Activated CD4-positive, alpha-beta memory T cell treated with anti-CD3 and anti-CD28 coated beads, Interleukin-2, amount 10 ng/mL, durations not matched to agents 7 days and 5 days (primary cell): ENCODE measurements at regions of chr22 and their contacts with region 1.

Region 1: GRCh38 chr22:22877523-22878210 is 9.9 kb upstream of the IGLL5 start:
- DNase-seq: peak; percentile 78
- H3K4me3 Mint-ChIP-seq: no peak overlapping the region
- H3K27ac Mint-ChIP-seq: no peak overlapping the region
- H3K4me1 Mint-ChIP-seq: no peaks in the 10 kb centered on the region
- H3K27me3 Mint-ChIP-seq: peaks cover 23% of the 10 kb centered on the region

Region 2: DNA sequence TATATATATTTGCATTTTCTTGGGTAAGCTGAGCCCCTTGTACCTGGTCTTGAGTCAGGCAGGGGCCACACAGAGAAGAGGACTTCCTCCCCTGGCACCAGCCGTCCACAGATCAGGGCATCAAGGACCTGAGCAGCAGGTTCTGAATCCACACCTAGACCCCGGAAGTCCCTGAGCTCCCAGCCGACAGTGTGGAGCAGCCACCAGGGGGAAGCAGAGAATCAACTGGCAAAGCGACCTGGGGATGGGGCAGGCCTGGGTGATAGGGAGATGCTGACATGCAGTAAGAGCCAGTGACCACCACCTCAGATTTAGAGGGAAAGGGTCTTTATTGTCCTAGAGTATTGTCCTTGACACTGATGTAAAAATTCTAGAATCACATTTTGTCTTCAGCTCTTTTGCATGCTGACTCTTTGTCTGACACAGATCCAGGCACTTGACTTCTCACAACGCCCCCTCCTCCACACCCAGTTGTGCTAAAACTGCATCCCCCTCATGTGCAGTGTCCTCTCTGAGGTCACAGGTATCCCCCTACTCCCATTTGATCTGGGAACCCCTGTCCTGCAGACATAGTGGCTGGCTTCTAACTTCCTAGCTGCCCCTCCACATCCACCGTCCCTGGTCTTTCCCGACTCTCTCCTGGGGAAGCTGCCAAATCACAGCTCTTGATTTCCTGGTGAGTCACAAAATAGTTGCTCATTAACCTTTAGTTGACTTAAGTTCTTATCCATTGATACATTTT is 124.0 kb before region 1 on chr22:
- CTCF ChIA-PET with region 1: interaction called, 15 read pairs
- POLR2A ChIA-PET with region 1: no interaction called
- DNase-seq: peak; percentile 83
- H3K4me3 Mint-ChIP-seq: no peak overlapping the region
- H3K27ac Mint-ChIP-seq: no peak overlapping the region
- H3K4me1 Mint-ChIP-seq: peaks cover 6% of the 10 kb centered on the region
- H3K27me3 Mint-ChIP-seq: no peaks in the 10 kb centered on the region

Region 3: DNA sequence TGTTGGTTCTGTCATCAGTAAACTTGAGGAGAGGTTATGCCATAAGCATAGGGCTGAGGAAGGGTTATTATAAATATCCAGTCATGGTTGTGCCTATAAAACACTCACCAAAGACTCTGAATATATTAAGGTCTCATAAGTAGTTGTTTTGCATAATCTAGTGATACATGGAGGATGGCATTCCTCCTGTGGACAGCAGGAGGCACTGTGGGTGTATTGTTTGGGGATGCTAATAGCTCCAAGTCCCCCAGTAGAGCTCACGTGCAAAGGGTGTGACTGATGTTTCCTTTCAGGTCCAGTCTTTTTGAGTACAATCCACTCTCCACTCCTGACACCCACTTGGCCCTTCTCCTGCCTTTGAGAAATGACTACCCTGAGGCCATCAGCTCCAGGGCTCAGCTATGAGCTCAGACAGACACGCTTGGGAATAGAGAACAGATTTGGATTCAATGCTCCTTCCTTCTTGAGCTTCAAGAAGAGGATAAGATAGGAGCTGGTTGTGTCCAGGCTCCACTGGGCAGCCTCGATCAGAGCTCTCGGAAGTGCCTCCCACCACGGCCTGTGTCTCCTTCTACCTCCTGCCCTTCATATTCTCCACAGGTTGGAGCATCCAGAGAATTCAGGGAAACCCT is 75.2 kb before region 1 on chr22:
- CTCF ChIA-PET with region 1: interaction called, 235 read pairs
- POLR2A ChIA-PET with region 1: no interaction called
- DNase-seq: peak; percentile 55
- H3K4me3 Mint-ChIP-seq: no peak overlapping the region
- H3K27ac Mint-ChIP-seq: no peak overlapping the region
- H3K4me1 Mint-ChIP-seq: peaks cover 4% of the 10 kb centered on the region
- H3K27me3 Mint-ChIP-seq: peaks cover 13% of the 10 kb centered on the region

Region 4: DNA sequence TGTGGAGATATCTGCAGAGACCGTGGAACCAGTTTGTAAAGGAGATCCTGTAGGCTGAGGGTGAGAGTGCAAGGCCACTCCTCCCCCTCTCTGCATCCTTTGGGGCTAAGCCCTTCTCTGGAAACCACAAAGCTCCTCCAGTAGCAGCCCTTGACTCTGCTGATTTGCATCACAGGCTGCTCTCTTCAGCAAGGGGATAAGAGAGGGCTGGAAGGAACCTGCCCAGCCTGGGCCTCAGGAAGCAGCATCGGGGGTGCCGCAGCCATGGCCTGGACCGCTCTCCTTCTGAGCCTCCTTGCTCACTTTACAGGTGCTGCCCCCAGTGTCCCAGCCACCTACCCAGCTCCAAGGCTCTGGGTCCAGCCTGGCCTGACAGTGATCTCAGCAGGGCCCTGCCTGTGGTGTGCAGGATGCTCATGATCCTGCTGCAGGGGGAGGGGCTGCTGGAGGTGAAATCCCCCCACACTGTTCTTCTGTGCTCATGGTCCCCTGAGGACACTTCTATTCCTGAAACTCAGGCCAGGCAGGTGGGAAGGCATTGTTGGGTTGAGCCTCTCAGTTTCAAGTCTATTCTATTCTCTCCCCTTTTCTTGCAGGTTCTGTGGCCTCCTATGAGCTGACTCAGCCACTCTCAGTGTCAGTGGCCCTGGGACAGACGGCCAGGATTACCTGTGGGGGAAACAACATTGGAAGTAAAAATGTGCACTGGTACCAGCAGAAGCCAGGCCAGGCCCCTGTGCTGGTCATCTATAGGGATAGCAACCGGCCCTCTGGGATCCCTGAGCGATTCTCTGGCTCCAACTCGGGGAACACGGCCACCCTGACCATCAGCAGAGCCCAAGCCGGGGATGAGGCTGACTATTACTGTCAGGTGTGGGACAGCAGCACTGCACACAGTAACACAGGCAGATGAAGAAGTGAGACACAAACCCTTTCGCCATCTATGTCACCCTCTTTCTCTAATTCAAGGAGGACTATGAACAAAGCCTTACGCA is 58.5 kb before region 1 on chr22:
- CTCF ChIA-PET with region 1: interaction called, 11 read pairs
- POLR2A ChIA-PET with region 1: no interaction called
- DNase-seq: peak; percentile 76
- H3K4me3 Mint-ChIP-seq: peak overlapping the region; percentile 72
- H3K27ac Mint-ChIP-seq: peak overlapping the region; percentile 96
- H3K4me1 Mint-ChIP-seq: peaks cover 87% of the 10 kb centered on the region
- H3K27me3 Mint-ChIP-seq: no peaks in the 10 kb centered on the region

Region 5: DNA sequence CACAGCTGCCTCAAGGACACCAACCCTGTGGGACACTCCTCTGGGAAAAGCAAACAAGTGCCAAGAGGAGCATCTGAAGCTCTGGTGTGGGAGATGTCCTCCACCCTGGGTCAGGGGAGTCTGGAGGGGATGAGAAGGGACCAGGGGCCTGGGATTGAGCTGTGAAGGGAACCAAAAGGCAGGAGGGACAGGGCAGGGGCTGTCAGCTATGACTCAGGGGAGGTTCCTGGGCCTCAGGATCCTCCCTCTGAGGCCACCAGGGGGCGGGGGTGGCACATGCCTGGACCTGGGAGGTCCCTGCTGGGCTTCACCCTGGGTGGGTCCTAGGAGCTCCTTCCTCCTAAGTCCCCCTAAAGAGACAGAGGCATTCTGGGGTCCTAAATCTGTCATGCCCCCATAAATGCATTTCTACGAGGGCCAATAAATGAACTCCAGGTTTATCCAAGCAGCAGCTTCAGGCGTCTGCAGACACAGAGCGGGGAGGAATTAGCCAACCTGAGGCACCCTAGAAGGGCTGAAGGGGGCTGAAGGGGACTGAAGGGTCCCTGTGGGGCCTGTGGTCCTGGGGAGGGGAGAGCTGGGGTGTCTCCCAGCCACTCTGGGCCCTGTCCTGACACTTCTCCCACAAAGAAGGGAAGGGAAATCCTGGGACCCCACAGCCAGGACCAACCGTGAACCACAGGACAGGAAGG is 21.9 kb before region 1 on chr22:
- CTCF ChIA-PET with region 1: interaction called, 18 read pairs
- POLR2A ChIA-PET with region 1: interaction called, 3 read pairs
- DNase-seq: peak; percentile 51
- H3K4me3 Mint-ChIP-seq: no peak overlapping the region
- H3K27ac Mint-ChIP-seq: no peak overlapping the region
- H3K4me1 Mint-ChIP-seq: no peaks in the 10 kb centered on the region
- H3K27me3 Mint-ChIP-seq: peaks cover 31% of the 10 kb centered on the region

Region 6: DNA sequence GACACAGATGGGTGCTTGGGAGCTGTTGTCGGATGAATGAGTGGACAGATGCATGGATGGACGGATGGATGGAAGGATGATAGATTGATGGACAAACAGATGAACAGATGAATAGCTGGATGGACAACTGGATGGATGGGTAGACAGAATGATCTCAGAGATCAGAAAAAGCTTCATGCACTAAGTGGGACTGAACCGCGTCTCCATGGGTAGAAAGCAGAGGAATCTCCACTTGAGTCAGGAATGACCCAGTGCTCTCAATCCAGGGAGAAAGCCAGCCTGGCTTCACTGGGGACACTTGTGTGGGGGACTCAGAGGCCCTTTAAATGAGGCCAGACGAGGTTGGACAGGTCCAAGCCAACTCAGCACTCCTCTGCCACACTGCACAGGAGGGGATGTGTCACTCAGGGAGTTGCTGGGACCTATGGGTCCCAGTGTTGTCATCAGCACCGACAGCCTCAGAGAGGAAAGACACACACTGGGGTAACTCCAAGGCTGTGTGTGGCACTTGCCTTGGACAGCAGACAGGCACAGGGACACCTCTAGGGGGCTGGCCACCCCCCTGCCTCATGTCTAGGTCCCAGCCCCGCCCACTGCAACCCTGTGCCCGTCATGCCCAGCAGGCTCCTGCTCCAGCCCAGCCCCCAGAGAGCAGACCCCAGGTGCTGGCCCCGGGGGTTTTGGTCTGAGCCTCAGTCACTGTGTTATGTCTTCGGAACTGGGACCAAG is 15.6 kb after region 1 on chr22:
- CTCF ChIA-PET with region 1: no interaction called
- POLR2A ChIA-PET with region 1: no interaction called
- DNase-seq: no peak
- H3K4me3 Mint-ChIP-seq: no peak overlapping the region
- H3K27ac Mint-ChIP-seq: no peak overlapping the region
- H3K4me1 Mint-ChIP-seq: peaks cover 2% of the 10 kb centered on the region
- H3K27me3 Mint-ChIP-seq: peaks cover 75% of the 10 kb centered on the region